ENCODE measurements at regions of chr3 and their contacts with region 1.

Region 1: GRCh38 chr3:130759699-130760338 is 13.2 kb upstream of the PIK3R4 start:
- DNase-seq: peak; percentile 85
- H3K4me3 Mint-ChIP-seq: no peak overlapping the region
- H3K27ac Mint-ChIP-seq: no peak overlapping the region
- H3K4me1 Mint-ChIP-seq: peaks cover 29% of the 10 kb centered on the region
- H3K27me3 Mint-ChIP-seq: no peaks in the 10 kb centered on the region
- CTCF ChIP-seq: peak; percentile 93

Region 2: GRCh38 chr3:130916507-130917167 is 156.8 kb after region 1 on chr3:
- CTCF ChIA-PET with region 1: no interaction called
- intact Hi-C with region 1: no loop called
- DNase-seq: no peak
- H3K4me3 Mint-ChIP-seq: no peak overlapping the region
- H3K27ac Mint-ChIP-seq: no peak overlapping the region
- H3K4me1 Mint-ChIP-seq: peaks cover 36% of the 10 kb centered on the region
- H3K27me3 Mint-ChIP-seq: no peaks in the 10 kb centered on the region
- CTCF ChIP-seq: no peak

Region 3: DNA sequence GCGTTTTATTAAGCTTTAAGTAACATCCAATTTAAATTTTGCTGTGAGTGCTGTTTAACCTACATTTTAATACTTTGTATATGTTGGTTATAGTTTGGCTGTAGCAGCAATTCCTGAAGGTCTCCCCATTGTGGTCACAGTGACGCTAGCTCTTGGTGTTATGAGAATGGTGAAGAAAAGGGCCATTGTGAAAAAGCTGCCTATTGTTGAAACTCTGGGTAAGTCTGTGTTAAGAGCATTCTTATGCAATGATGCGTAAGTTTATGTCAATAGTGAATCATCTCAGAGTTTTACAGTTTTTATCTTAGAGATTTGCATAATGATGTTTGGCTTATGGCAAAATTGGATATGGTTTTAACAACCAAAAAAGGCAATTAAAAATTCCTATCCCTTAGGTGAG is 204.1 kb after region 1 on chr3:
- CTCF ChIA-PET with region 1: no interaction called
- intact Hi-C with region 1: loop called (anchors 5 kb)
- DNase-seq: peak; percentile 72
- H3K4me3 Mint-ChIP-seq: peak overlapping the region; percentile 5
- H3K27ac Mint-ChIP-seq: peak overlapping the region; percentile 94
- H3K4me1 Mint-ChIP-seq: peaks cover 62% of the 10 kb centered on the region
- H3K27me3 Mint-ChIP-seq: no peaks in the 10 kb centered on the region
- CTCF ChIP-seq: no peak

Region 4: DNA sequence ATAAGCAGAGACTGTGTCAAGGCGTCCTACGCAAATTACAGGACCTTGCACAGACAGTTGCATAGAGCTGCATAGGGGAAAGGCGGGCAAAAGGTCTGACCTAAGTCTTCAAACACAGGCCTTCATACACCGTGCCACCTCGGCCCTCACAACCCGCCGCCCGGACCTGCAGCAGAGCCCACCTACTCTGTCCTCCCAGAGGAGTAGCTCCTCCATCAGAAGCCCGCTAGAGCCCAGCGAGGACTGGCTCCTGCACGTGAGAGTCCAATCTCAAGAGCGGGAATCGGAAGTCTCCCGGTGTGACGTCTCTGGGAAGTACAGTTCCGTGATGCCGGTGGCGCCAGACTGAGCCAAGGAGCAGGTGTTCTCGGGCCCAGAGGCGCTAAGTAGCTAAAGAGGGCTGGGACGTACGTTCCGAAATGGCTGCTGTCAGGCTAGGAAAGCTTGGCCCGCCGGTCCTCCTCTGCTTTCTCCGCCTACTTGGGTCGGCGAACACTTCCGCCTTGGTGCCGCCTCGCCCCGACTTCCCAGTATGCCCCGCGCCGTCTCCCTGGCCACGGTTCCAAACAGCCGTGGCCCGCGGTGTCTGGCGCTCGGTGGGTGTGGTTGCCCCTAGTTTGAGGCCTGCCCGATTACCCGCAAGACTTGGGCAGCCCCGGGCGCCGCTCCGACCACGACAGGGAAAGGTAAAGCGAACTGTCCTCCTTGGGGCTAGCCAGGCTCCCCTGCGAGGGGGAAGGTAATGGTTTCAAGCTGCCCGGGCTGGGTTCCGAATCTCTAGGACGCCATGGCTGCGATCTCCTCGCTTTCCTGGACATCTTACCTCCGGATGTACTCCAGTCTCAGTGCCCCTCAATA is 266.7 kb after region 1 on chr3 and contains the starts of genes ASTE1 and NEK11:
- CTCF ChIA-PET with region 1: no interaction called
- intact Hi-C with region 1: loop called (anchors 5 kb)
- DNase-seq: peak; percentile 98
- H3K4me3 Mint-ChIP-seq: peak within 1 kb of the TSS; percentile 97
- H3K27ac Mint-ChIP-seq: peak within 1 kb of the TSS; percentile 97
- H3K4me1 Mint-ChIP-seq: peaks cover 36% of the 10 kb centered on the region
- H3K27me3 Mint-ChIP-seq: no peaks in the 10 kb centered on the region
- CTCF ChIP-seq: no peak
- total RNA-seq, gene ASTE1: 12.1 and 12.5 TPM in 2 replicates
- total RNA-seq, gene NEK11: 19.9 and 23.9 TPM in 2 replicates